Activated CD4-positive, alpha-beta memory T cell treated with anti-CD3 and anti-CD28 coated beads for 36 hours (primary cell): ENCODE measurements at regions of chr1 and their contacts with region 1.

Region 1: GRCh38 chr1:161292631-161293030 is 17.1 kb downstream of the MPZ start:
- DNase-seq: no peak
- H3K4me3 Mint-ChIP-seq: no peak overlapping the region
- H3K27ac Mint-ChIP-seq: no peak overlapping the region
- H3K4me1 Mint-ChIP-seq: no peaks in the 10 kb centered on the region
- H3K27me3 Mint-ChIP-seq: no peaks in the 10 kb centered on the region

Region 2: GRCh38 chr1:160911441-160911840 is 381.2 kb before region 1 on chr1:
- CTCF ChIA-PET with region 1: no interaction called
- POLR2A ChIA-PET with region 1: no interaction called
- intact Hi-C with region 1: no loop called
- DNase-seq: no peak
- H3K4me3 Mint-ChIP-seq: no peak overlapping the region
- H3K27ac Mint-ChIP-seq: no peak overlapping the region
- H3K4me1 Mint-ChIP-seq: no peaks in the 10 kb centered on the region
- H3K27me3 Mint-ChIP-seq: no peaks in the 10 kb centered on the region

Region 3: DNA sequence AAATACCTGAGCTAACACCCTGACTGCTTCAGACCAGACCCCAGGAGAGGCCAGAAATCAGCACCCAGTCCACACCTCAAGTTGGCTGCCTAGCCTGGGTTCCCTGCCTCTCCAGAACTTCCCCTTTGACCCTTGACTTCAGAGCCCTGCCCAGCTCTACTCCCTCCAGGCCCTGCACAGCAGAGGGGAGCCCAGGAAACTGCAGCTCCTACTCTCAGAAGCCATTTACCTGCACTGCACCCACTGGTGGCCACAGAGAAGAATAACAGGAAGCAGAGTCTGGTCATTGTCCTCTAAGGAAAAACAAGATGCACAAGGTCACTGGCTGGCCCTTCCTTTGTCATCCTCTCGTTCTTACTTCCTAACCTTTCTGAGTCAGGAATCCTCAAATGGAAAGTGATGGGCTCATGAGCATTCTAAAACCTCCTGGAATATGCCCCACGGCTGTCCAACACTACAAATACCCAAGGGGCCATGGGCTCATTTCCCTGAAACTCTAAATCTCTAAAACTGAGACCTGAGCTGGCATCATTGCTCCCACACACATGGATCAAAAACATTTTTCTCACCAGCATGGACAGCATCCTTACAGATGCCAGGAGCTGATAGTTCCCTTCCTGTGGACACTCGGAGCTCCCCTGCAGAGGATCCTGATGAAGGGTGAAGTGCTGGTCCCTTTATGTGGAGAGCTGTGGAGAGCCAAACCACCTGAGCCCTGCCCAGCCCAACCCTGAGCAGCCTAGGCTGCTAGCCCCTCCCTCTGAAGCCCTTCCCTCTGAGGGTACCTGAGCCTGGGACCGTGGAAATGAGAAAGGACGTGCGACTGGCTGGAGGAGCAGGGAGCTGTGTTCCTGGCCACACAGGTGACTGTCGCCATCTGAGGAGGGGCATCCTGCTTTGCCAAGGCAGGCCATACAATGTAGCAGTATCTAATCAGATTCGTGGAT is 338.2 kb before region 1 on chr1 and contains the start of gene ITLN2:
- CTCF ChIA-PET with region 1: no interaction called
- POLR2A ChIA-PET with region 1: no interaction called
- intact Hi-C with region 1: no loop called
- DNase-seq: peak; percentile 63
- H3K4me3 Mint-ChIP-seq: no peak within 1 kb of the TSS
- H3K27ac Mint-ChIP-seq: no peak within 1 kb of the TSS
- H3K4me1 Mint-ChIP-seq: peaks cover 2% of the 10 kb centered on the region
- H3K27me3 Mint-ChIP-seq: no peaks in the 10 kb centered on the region
- total RNA-seq, gene ITLN2: not detected

Region 4: GRCh38 chr1:161305867-161306519 is 13.4 kb after region 1 on chr1:
- CTCF ChIA-PET with region 1: interaction called, 27 read pairs
- POLR2A ChIA-PET with region 1: no interaction called
- intact Hi-C with region 1: no loop called
- DNase-seq: peak; percentile 94
- H3K4me3 Mint-ChIP-seq: peak overlapping the region; percentile 89
- H3K27ac Mint-ChIP-seq: peak overlapping the region; percentile 78
- H3K4me1 Mint-ChIP-seq: peaks cover 31% of the 10 kb centered on the region
- H3K27me3 Mint-ChIP-seq: no peaks in the 10 kb centered on the region

Region 5: GRCh38 chr1:161481624-161482392 is 189.2 kb after region 1 on chr1:
- CTCF ChIA-PET with region 1: no interaction called
- POLR2A ChIA-PET with region 1: no interaction called
- intact Hi-C with region 1: no loop called
- DNase-seq: no peak
- H3K4me3 Mint-ChIP-seq: no peak overlapping the region
- H3K27ac Mint-ChIP-seq: no peak overlapping the region
- H3K4me1 Mint-ChIP-seq: no peaks in the 10 kb centered on the region
- H3K27me3 Mint-ChIP-seq: peaks cover 5% of the 10 kb centered on the region